ENCODE measurements at regions of chr2 and their contacts with region 1.

Region 1: GRCh38 chr2:27050281-27050995 is 1.0 kb upstream of the AGBL5 start:
- DNase-seq: peak; percentile 82

Region 2: GRCh38 chr2:26911911-26912861 is 138.3 kb before region 1 on chr2:
- CTCF ChIA-PET with region 1: no interaction called
- POLR2A ChIA-PET with region 1: no interaction called
- DNase-seq: no peak

Region 3: GRCh38 chr2:27032495-27033252 is 17.8 kb before region 1 on chr2 and contains the start of gene TMEM214:
- CTCF ChIA-PET with region 1: interaction called, 3 read pairs
- POLR2A ChIA-PET with region 1: interaction called, 44 read pairs
- DNase-seq: peak; percentile 93

Region 4: GRCh38 chr2:27071277-27071989 is 21.0 kb after region 1 on chr2 and contains the start of gene OST4:
- CTCF ChIA-PET with region 1: no interaction called
- POLR2A ChIA-PET with region 1: interaction called, 91 read pairs
- DNase-seq: peak; percentile 96

Region 5: DNA sequence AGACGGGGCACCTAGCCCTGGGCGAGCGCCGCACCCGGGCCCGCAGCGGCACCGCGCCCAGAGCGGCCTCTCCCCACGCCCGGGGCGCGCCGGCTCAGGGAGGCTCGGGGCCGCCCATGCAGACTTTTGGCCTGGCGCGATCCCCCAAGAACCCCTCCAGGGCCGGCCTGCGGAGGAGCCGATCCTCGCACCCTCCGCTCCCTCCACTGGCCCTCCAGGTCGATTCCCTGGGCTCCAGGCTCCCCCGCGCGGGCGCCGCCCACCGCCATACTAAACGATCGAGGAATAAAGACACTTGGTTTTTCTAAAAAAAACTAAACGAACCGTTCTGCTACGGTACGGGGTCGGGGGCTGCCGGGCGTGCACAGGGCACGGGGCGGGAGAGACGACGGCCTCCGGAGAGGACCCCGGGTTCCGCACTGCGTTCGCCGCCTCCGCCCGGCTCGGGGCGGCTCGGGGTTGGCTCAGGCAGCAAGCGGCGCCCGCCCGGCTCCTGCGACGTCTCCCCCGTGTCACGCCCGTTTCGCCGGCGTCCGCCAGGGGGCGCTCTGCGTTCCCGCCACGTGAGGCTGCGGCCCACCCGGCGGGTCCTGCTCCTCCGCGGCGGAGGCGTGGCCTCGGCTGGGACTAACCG is 35.8 kb after region 1 on chr2:
- CTCF ChIA-PET with region 1: interaction called, 4 read pairs
- POLR2A ChIA-PET with region 1: interaction called, 37 read pairs
- DNase-seq: peak; percentile 98